Thyroid gland (tissue), 4 donors: ENCODE measurements at regions of chr16 and their contacts with region 1.

Region 1: DNA sequence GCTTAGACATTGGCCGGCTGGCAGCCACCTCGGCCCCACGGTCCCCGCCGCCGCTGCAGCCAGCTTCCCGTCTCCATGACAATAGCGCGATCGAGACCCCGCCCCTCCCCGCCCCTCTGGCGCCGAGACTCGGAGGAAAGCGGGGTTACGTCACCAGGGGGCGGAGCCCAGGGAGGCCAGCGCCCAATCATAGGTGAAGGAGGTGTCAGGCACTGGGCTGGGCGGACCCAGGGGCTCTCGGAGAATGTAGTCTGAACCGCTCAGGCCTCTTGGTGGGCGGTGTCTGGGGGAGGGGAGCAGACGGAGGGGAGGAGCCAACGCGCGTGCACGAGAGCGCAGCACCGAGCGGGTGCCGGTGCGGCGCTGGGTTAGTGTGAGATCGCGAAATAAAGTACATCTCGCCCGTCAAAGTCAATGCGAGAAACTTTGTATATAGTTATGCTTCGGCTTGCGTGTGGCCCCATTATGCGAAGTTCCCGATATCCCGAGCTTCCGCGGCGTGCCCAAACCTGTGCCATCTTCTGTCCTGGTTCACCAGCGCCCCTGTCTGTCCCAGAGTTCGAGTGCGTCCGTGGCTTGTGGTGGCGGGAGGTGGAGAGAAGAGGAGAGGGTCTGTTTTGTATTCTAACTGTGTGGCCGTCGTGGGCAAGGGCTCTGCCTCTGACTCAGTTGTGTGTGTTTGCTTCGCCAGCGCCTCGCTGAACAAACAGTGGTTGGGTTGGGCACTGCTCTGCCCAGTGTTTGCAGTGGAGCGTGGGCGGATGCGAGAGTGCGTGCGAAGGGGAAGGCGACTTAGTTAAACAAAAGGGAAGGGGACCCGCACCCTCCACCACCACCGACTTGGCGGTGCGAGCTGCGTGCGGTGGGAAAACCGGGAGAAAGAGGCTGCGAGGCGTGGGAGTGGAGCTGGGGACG is 1.3 kb upstream of the IRX5 start:
- DNase-seq: peak; percentile 96 to 97
- H3K4me3 ChIP-seq: peak overlapping the region in 2 of 3 donors; percentile 27 to 32
- H3K27ac ChIP-seq: peak overlapping the region in 1 of 3 donors; percentile 43
- H3K4me1 ChIP-seq: peaks cover 22 to 31% of the 10 kb centered on the region in 2 donors
- H3K27me3 ChIP-seq: peaks cover 50% of the 10 kb centered on the region
- CTCF ChIP-seq: no peak
- POLR2A ChIP-seq: no peak

Region 2: GRCh38 chr16:54282202-54282927 is 647.0 kb before region 1 on chr16:
- intact Hi-C with region 1: loop called (anchors 5 kb)
- DNase-seq: peak; percentile 74 to 77
- H3K4me3 ChIP-seq: no peak overlapping the region
- H3K27ac ChIP-seq: no peak overlapping the region
- H3K4me1 ChIP-seq: peaks cover 34 to 44% of the 10 kb centered on the region in 2 donors
- H3K27me3 ChIP-seq: peaks cover 31% of the 10 kb centered on the region
- CTCF ChIP-seq: peak; percentile 28 to 82 (median 55)
- POLR2A ChIP-seq: no peak